ENCODE measurements at regions of chr6 and their contacts with region 1.

Region 1: DNA sequence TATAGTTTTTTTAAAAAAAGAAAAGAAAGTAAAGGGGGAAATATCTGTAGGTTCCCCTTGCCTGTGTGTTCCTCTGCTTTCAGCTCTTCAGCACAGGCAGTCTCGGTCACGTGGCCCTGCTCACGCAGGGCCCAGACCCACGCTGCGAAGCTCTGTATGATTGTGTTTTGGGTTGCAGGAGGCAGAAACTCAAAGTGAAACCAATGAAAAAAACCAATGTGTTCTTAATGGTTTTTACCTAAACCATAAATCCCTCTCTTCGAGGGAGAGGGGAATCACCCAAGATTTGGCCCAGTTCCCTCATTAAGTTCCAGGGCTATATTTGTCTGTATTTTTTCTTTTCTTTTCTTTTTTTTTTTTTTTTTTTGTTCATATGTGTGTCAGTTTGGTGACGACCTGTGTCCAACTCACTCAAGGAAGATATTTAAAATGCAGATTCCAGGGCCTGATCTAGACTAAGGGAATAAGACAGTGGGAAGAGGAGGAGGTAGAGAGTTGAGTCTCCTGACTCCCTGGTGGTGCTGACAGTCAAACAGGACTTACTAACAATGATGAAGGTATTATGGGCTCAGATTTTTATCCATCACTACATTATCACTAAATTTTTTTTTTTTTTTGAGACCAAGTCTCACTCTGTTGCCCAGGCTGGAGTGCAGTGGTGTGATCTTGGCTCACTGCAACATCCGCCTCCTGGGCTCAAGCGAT is 33.8 kb upstream of the RREB1 start:
- DNase-seq: peak in 8 of 9 donors; percentile 54 to 74 (median 64)
- ATAC-seq: peak; percentile 98
- H3K4me3 ChIP-seq: peak overlapping the region; percentile 2
- H3K4me3 Mint-ChIP-seq: peak overlapping the region; percentile 50 to 88 (median 76)
- H3K27ac ChIP-seq: peak overlapping the region; percentile 44
- H3K27ac Mint-ChIP-seq: peak overlapping the region; percentile 48 to 94 (median 85)
- H3K4me1 ChIP-seq: peaks cover 0 to 4% of the 10 kb centered on the region in 2 donors
- H3K4me1 Mint-ChIP-seq: peaks cover 7 to 17% (median 12%) of the 10 kb centered on the region in 7 donors
- H3K27me3 ChIP-seq: no peaks in the 10 kb centered on the region
- H3K27me3 Mint-ChIP-seq: peaks cover 0 to 72% (median 0%) of the 10 kb centered on the region in 5 donors

Region 2: DNA sequence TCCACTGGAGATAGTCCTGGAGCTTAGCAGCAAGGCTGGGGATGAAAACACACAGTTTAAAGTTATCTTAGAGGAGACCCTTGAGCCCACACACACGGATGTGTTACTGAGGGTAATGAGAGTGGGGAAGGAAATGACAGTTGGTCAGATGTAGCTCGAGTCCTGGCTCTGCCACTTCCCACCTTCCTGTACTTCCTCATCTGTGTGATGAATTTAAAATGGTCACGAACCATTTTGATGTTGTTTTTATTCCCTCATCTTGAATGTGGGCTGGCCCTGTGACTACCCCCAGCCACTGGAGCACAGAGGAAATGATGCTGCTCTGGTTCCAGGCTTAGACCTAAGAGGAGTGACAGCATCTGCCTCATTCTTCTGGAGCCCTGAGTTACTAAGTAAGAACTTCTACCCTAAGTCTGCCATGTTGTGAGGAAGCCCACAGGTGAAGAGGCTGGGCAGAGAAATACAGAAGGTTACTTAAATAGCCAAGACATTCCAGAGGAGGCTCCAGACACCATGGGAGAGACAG is 1208.4 kb before region 1 on chr6:
- CTCF ChIA-PET with region 1: no interaction called
- POLR2A ChIA-PET with region 1: no interaction called
- intact Hi-C with region 1: no loop called
- DNase-seq: peak in 1 of 9 donors; percentile 30
- ATAC-seq: peak; percentile 10
- H3K4me3 ChIP-seq: peak overlapping the region; percentile 1
- H3K4me3 Mint-ChIP-seq: peak overlapping the region; percentile 22 to 84 (median 48)
- H3K27ac ChIP-seq: peak overlapping the region; percentile 70
- H3K27ac Mint-ChIP-seq: peak overlapping the region; percentile 14 to 100 (median 98)
- H3K4me1 ChIP-seq: peaks cover 31 to 44% of the 10 kb centered on the region in 2 donors
- H3K4me1 Mint-ChIP-seq: peaks cover 30 to 66% (median 59%) of the 10 kb centered on the region in 7 donors
- H3K27me3 ChIP-seq: no peaks in the 10 kb centered on the region
- H3K27me3 Mint-ChIP-seq: peaks cover 0 to 4% (median 0%) of the 10 kb centered on the region in 5 donors

Region 3: GRCh38 chr6:7051233-7052114 is 22.5 kb before region 1 on chr6:
- CTCF ChIA-PET with region 1: no interaction called
- POLR2A ChIA-PET with region 1: interaction called, 3 read pairs
- intact Hi-C with region 1: loop called in 1 of 2 experiments (anchors 1 kb)
- DNase-seq: peak; percentile 34 to 81 (median 70)
- ATAC-seq: peak; percentile 83
- H3K4me3 ChIP-seq: peak overlapping the region; percentile 77
- H3K4me3 Mint-ChIP-seq: peak overlapping the region; percentile 20 to 89 (median 79)
- H3K27ac ChIP-seq: peak overlapping the region; percentile 59
- H3K27ac Mint-ChIP-seq: peak overlapping the region in 6 of 9 donors; percentile 69 to 86 (median 79)
- H3K4me1 ChIP-seq: peaks cover 0 to 4% of the 10 kb centered on the region in 2 donors
- H3K4me1 Mint-ChIP-seq: peaks cover 5 to 18% (median 11%) of the 10 kb centered on the region in 7 donors
- H3K27me3 ChIP-seq: no peaks in the 10 kb centered on the region
- H3K27me3 Mint-ChIP-seq: peaks cover 0 to 66% (median 0%) of the 10 kb centered on the region in 5 donors

Region 4: DNA sequence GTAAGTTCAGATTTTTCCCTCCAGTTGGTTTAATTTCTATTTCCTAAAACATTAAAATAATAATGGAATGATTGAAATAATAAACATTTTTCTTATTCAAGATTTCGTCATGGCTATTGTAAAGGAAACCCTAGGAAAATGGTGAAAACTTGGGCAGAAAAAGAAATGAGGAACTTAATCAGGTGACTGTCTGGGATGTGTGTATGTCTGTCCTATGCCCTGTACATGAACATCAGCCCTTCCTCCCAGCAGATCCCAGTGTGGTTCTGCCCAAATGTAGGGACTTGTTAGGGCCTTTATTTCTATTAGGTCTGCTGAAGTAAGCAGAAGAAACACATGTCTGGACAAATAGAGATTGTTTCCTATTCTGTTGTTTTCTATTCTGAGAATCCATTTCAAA is 328.7 kb after region 1 on chr6:
- CTCF ChIA-PET with region 1: no interaction called
- POLR2A ChIA-PET with region 1: no interaction called
- intact Hi-C with region 1: no loop called
- DNase-seq: no peak
- ATAC-seq: no peak
- H3K4me3 ChIP-seq: no peak overlapping the region
- H3K4me3 Mint-ChIP-seq: no peak overlapping the region
- H3K27ac ChIP-seq: no peak overlapping the region
- H3K27ac Mint-ChIP-seq: peak overlapping the region in 1 of 9 donors; percentile 46
- H3K4me1 ChIP-seq: no peaks in the 10 kb centered on the region
- H3K4me1 Mint-ChIP-seq: peaks cover 0 to 6% (median 0%) of the 10 kb centered on the region in 7 donors
- H3K27me3 ChIP-seq: no peaks in the 10 kb centered on the region
- H3K27me3 Mint-ChIP-seq: no peaks in the 10 kb centered on the region

Measured in naive thymus-derived CD4-positive, alpha-beta T cell (primary cell).